A549 (cell line): ENCODE measurements at regions of chr16 and their contacts with region 1.

Region 1: DNA sequence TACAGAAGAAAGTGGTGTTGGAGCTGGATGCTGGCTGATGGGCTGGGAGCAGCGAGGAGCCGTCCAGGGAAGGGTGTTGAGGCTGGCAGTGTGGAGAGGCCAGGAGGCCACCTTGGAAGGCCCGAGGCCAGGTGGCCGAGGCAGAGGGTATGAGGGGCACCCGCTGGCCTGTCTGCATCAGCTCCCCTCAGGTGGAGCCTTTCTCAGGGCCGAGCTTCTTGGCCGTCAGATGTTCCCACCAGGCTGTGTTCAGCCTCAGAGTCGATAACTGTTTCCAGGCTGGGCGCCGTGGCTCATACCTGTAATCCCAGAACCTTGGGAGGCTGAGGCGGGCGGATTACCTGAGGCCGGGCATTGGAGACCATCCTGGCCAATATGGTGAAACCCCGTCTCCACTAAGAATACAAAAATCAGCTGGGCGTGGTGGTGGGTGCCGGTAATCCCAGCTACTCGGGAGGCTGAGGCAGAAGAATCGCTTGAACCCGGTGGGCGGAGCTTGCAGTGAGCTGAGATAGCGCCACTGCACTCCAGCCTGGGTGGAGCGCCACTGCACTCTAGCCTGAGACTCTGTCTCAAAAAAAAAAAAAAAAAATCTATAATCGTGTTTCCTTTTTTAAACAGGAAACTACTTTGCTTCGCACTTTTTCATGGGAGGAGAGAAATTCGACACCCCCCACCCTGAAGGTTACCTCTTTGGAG is 25.3 kb downstream of the MGRN1 start:
- DNase-seq: no peak
- ATAC-seq: no peak
- H3K4me3 ChIP-seq: no peak overlapping the region
- H3K27ac ChIP-seq: no peak overlapping the region; a peak in 1 of 6 replicates
- H3K4me1 ChIP-seq: peaks cover 26% of the 10 kb centered on the region
- CTCF ChIP-seq: no peak
- EP300 ChIP-seq: no peak
- POLR2A ChIP-seq: no peak
- RAD21 ChIP-seq: no peak

Region 2: GRCh38 chr16:4552541-4552940 is 97.4 kb before region 1 on chr16:
- CTCF ChIA-PET with region 1: no interaction called
- POLR2A ChIA-PET with region 1: no interaction called
- DNase-seq: no peak
- ATAC-seq: no peak
- H3K4me3 ChIP-seq: no peak overlapping the region
- H3K27ac ChIP-seq: no peak overlapping the region
- H3K4me1 ChIP-seq: no peaks in the 10 kb centered on the region
- CTCF ChIP-seq: no peak
- EP300 ChIP-seq: no peak
- POLR2A ChIP-seq: no peak
- RAD21 ChIP-seq: no peak

Region 3: DNA sequence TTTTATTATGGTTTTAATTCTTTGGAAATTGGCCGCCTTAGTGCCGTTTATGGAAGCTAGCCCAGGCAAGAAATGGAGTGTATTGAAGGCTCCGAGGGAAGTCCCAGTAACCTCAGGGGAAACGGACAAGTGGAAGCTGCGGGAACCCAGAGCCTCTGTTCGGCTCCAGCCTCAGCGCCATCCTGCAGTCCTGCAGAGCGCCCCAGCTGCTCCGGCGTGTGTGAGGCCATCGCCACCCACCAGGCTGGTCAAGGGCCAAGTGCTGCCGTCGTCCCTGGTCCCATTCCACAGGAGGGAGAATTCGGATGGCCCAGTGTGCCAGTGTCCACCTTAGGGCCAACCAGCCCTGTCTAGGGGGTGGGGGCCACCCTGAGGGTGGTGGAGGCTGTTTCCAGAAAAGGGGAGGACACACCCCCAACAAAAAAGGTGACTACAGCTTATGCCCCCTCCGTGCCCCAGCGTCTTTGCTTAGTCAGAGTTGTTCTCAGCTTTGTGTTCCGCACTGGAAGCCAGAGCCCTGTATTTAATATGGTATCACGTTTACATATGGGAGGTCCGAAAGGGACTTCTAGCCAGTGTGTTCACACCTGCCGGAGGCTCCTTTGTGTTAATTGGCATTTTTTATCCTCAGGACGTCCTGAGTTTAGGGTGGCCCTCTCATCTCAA is 12.3 kb before region 1 on chr16:
- CTCF ChIA-PET with region 1: interaction called, 24 read pairs
- POLR2A ChIA-PET with region 1: no interaction called
- DNase-seq: no peak
- ATAC-seq: no peak
- H3K4me3 ChIP-seq: no peak overlapping the region
- H3K27ac ChIP-seq: no peak overlapping the region
- H3K4me1 ChIP-seq: no peaks in the 10 kb centered on the region
- CTCF ChIP-seq: no peak
- EP300 ChIP-seq: no peak
- POLR2A ChIP-seq: no peak
- RAD21 ChIP-seq: no peak

Region 4: DNA sequence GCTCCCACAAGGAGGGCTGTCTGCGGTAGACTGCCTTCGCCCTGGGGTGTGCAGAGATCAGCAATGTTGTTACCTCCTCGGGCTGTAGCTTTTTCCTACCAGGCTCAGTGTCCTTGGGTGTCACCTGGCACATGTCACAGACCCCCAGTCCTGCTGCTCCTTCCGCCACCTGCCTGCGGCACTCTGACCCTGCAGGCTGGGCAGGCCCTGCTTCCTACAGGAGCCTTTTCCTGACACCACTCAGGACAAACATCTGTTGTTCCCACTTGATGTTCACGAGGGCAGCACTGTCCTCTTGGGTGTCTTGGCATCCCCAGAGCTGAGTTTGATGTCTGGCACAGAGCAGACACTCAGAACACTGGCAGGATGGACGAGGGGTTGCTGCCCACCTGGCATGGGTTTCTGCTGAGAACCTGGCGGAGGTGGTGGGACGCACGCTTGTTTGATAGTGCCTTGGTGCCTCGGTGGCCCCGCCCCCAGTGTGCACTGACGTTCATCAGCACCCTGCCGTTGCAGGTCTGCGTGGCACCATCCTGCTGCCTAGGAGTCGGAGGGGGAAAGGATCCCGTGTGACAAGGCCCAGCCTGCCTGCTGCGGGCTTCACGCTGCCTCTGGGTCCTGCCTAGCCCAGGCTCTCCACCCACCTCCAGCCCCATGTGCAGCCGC is 16.8 kb after region 1 on chr16:
- CTCF ChIA-PET with region 1: interaction called, 13 read pairs
- POLR2A ChIA-PET with region 1: no interaction called
- DNase-seq: no peak
- ATAC-seq: no peak
- H3K4me3 ChIP-seq: no peak overlapping the region
- H3K27ac ChIP-seq: no peak overlapping the region
- H3K4me1 ChIP-seq: peaks cover 19% of the 10 kb centered on the region
- CTCF ChIP-seq: no peak
- EP300 ChIP-seq: no peak
- POLR2A ChIP-seq: no peak
- RAD21 ChIP-seq: no peak

Region 5: DNA sequence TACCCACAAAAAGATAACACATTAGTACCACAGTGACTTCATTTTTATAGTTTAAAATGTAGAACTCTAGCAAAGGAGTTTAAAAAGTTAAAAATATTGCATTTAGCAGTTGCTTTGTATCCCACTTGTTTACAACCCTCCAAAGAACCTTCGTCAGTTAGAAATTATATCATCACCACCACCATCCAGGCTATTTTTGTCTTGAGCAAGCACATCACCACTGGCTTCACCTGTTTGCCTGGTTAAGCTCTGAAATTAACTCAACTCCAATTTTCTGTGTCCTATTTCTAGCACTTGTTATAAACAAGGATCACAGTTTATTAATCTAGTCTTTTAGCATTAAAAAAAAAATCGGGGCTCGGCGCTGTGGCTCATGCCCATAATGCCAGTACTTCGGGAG is 191.1 kb after region 1 on chr16:
- CTCF ChIA-PET with region 1: no interaction called
- POLR2A ChIA-PET with region 1: no interaction called
- DNase-seq: no peak
- ATAC-seq: no peak
- H3K4me3 ChIP-seq: no peak overlapping the region
- H3K27ac ChIP-seq: no peak overlapping the region
- H3K4me1 ChIP-seq: peaks cover 9% of the 10 kb centered on the region; the same call in 2 of the 3 replicates
- CTCF ChIP-seq: no peak
- EP300 ChIP-seq: no peak
- POLR2A ChIP-seq: no peak
- RAD21 ChIP-seq: no peak